CD4-positive, alpha-beta memory T cell (primary cell): ENCODE measurements at regions of chr6 and their contacts with region 1.

Region 1: DNA sequence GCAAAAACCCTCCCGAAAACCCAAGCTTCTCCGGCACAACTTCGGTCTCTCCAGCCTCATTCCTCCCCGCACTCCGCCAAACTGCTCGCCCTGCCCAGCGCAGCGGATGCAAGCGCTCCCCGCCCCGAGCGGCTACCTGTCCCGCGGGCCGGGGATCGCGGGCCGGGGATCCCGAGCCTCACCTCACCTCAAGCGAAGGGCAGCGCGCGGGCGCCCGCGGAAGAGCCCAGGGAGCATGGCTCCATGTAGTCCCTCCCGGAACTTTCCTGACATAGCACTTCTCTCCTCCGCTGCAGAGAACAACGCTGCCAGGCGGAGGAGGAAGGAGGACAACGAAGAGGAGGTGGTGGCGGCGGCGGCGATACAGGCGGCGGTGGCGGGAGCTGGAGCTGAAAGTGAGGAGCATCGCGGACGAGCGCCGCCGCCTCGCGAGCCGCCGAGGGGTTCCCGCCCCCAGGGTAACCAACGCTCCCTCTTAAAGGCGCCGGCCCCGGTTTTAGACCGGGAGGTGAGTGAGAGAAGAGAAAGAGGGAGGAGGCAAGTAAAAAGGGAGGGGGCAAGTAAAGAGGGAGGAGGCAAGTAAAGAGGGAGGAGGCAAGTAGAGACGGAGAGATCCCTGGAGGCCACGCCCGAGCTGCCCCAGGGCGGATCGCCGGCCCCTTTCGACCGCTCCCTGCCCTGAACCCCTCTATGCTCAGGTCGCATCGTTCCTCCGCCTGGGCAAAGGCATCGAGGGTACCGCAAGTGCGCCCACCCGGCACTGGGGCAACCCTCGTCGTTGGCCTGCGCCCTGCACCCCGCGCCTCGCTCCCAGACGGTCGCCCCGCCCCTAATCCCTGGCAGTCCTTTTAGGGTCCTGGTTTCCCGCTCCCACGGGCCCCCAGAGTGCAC is at the start of gene GPR63:
- DNase-seq: peak; percentile 64 to 78 (median 66)
- H3K4me3 ChIP-seq: peak within 1 kb of the TSS; percentile 2 to 69
- H3K4me3 Mint-ChIP-seq: peak within 1 kb of the TSS; percentile 89 to 96 (median 93)
- H3K27ac ChIP-seq: peak within 1 kb of the TSS; percentile 3
- H3K27ac Mint-ChIP-seq: peak within 1 kb of the TSS; percentile 49 to 87 (median 77)
- H3K4me1 ChIP-seq: peaks cover 18% of the 10 kb centered on the region
- H3K4me1 Mint-ChIP-seq: peaks cover 10 to 33% (median 22%) of the 10 kb centered on the region in 4 donors
- H3K27me3 ChIP-seq: no peaks in the 10 kb centered on the region
- H3K27me3 Mint-ChIP-seq: peaks cover 0 to 12% of the 10 kb centered on the region in 2 donors
- total RNA-seq, gene GPR63: 1.9 TPM

Region 2: DNA sequence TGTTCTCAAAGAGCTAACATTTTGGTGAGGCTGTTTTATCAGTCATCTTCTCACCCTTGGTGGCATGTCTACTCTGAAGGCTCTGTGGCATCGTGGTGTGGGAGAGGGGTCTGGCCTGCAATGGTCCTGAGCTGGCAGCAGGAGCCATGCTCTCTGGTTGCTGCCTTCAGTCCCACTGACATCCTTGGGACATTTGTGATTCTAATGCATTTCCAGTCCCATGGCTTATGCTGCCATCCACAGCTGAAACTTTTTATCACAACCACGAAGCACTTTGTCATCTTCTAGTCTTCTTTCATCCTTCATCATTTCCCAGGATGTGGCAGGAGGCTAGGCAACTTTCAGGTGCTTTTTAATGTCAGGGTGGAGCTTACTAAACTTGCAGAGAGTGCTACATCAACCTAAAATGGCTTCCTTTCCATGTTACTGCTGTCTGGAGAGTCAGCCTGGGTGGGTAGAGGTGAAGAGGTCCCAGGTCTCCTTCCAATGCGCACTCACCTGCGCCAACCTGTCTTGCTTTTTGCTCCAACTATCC is 77.1 kb before region 1 on chr6:
- CTCF ChIA-PET with region 1: no interaction called
- POLR2A ChIA-PET with region 1: no interaction called
- intact Hi-C with region 1: no loop called
- DNase-seq: no peak
- H3K4me3 ChIP-seq: no peak overlapping the region
- H3K4me3 Mint-ChIP-seq: no peak overlapping the region
- H3K27ac ChIP-seq: no peak overlapping the region
- H3K27ac Mint-ChIP-seq: no peak overlapping the region
- H3K4me1 ChIP-seq: no peaks in the 10 kb centered on the region
- H3K4me1 Mint-ChIP-seq: peaks cover 0 to 9% (median under 1%) of the 10 kb centered on the region in 4 donors
- H3K27me3 ChIP-seq: no peaks in the 10 kb centered on the region
- H3K27me3 Mint-ChIP-seq: peaks cover 0 to 1% of the 10 kb centered on the region in 2 donors

Region 3: GRCh38 chr6:96816301-96816817 is 21.0 kb before region 1 on chr6:
- CTCF ChIA-PET with region 1: no interaction called
- POLR2A ChIA-PET with region 1: no interaction called
- intact Hi-C with region 1: no loop called
- DNase-seq: no peak
- H3K4me3 ChIP-seq: no peak overlapping the region
- H3K4me3 Mint-ChIP-seq: no peak overlapping the region
- H3K27ac ChIP-seq: no peak overlapping the region
- H3K27ac Mint-ChIP-seq: no peak overlapping the region
- H3K4me1 ChIP-seq: no peaks in the 10 kb centered on the region
- H3K4me1 Mint-ChIP-seq: peaks cover 0 to 2% (median under 1%) of the 10 kb centered on the region in 4 donors
- H3K27me3 ChIP-seq: peaks cover 6% of the 10 kb centered on the region
- H3K27me3 Mint-ChIP-seq: no peaks in the 10 kb centered on the region

Region 4: DNA sequence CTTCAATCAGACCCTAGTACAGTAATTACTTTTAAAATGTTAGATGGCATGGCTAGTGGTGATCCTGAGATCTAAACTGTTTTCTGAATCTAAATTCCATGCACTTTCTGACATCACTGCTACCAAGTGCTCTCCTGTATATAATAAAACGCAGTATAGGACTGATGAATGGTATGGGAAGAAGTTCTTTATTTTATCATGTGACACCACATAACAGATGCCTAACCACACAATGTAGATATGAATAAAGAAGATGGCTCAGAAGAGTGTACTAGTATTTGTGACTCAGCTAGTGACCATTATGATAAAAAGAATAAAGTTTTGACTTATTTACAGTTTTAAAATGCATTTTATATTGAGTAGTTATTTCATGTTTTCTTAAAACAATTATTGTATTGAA is 51.8 kb after region 1 on chr6:
- CTCF ChIA-PET with region 1: no interaction called
- POLR2A ChIA-PET with region 1: no interaction called
- intact Hi-C with region 1: loop called (anchors 2 kb)
- DNase-seq: no peak
- H3K4me3 ChIP-seq: no peak overlapping the region
- H3K4me3 Mint-ChIP-seq: no peak overlapping the region
- H3K27ac ChIP-seq: no peak overlapping the region
- H3K27ac Mint-ChIP-seq: no peak overlapping the region
- H3K4me1 ChIP-seq: peaks cover 10% of the 10 kb centered on the region
- H3K4me1 Mint-ChIP-seq: peaks cover 4 to 7% (median 7%) of the 10 kb centered on the region in 4 donors
- H3K27me3 ChIP-seq: no peaks in the 10 kb centered on the region
- H3K27me3 Mint-ChIP-seq: no peaks in the 10 kb centered on the region

Region 5: GRCh38 chr6:97282726-97283617 is 445.6 kb after region 1 on chr6 and contains the start of gene MMS22L:
- CTCF ChIA-PET with region 1: no interaction called
- POLR2A ChIA-PET with region 1: no interaction called
- intact Hi-C with region 1: loop called (anchors 2 kb)
- DNase-seq: peak; percentile 92 to 93 (median 93)
- H3K4me3 ChIP-seq: peak within 1 kb of the TSS; percentile 73 to 92
- H3K4me3 Mint-ChIP-seq: peak within 1 kb of the TSS; percentile 92 to 98 (median 96)
- H3K27ac ChIP-seq: peak within 1 kb of the TSS; percentile 64
- H3K27ac Mint-ChIP-seq: peak within 1 kb of the TSS; percentile 86 to 96 (median 92)
- H3K4me1 ChIP-seq: peaks cover 22% of the 10 kb centered on the region
- H3K4me1 Mint-ChIP-seq: peaks cover 16 to 37% (median 26%) of the 10 kb centered on the region in 4 donors
- H3K27me3 ChIP-seq: no peaks in the 10 kb centered on the region
- H3K27me3 Mint-ChIP-seq: no peaks in the 10 kb centered on the region
- total RNA-seq, gene MMS22L: 12.4 to 13.2 TPM